ENCODE measurements at regions of chr17 and their contacts with region 1.

Region 1: GRCh38 chr17:27654654-27655524 is 23.9 kb downstream of the LGALS9 start:
- DNase-seq: peak; percentile 49
- H3K4me3 Mint-ChIP-seq: no peak overlapping the region
- H3K27ac Mint-ChIP-seq: no peak overlapping the region
- H3K4me1 Mint-ChIP-seq: peaks cover 13% of the 10 kb centered on the region
- H3K27me3 Mint-ChIP-seq: no peaks in the 10 kb centered on the region

Region 2: GRCh38 chr17:27381007-27381501 is 273.8 kb before region 1 on chr17:
- intact Hi-C with region 1: loop called (anchors 10 kb)
- DNase-seq: peak; percentile 72
- H3K4me3 Mint-ChIP-seq: no peak overlapping the region
- H3K27ac Mint-ChIP-seq: no peak overlapping the region
- H3K4me1 Mint-ChIP-seq: peaks cover 7% of the 10 kb centered on the region
- H3K27me3 Mint-ChIP-seq: peaks cover 29% of the 10 kb centered on the region

Region 3: DNA sequence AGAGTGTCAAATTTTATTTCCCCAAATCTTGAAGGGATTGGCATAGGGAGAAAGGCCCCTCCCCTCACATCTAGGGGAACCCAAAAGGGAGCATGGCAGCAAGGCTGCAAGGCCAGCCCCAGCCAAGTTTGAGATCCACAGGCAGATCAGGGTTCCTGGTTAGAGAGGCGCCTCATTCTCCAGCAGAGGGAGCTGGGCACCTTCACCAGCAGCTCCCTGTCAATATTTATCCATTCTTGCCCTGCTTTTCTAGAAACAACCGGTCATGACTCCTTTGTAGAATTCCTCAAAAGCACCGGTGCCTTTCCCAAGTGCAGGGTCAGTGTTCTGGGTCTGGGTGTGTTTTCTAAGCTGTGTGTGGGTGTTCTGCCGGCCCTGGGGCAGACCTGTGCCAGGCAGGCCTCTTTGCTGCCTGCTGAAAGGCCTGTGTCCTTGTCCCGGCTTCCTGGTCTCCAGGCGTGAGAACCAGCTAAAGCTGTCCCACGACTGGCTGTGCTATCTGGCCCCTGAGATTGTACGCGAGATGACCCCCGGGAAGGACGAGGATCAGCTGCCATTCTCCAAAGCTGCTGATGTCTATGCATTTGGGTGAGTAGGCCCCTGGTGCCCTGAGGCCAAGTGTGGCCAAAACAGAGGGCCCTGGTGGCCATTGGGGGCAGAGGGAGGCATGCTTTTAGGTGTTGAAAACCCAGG is 45.1 kb before region 1 on chr17:
- intact Hi-C with region 1: loop called (anchors 1 kb)
- DNase-seq: no peak
- H3K4me3 Mint-ChIP-seq: no peak overlapping the region
- H3K27ac Mint-ChIP-seq: no peak overlapping the region
- H3K4me1 Mint-ChIP-seq: peaks cover 32% of the 10 kb centered on the region
- H3K27me3 Mint-ChIP-seq: no peaks in the 10 kb centered on the region

Region 4: DNA sequence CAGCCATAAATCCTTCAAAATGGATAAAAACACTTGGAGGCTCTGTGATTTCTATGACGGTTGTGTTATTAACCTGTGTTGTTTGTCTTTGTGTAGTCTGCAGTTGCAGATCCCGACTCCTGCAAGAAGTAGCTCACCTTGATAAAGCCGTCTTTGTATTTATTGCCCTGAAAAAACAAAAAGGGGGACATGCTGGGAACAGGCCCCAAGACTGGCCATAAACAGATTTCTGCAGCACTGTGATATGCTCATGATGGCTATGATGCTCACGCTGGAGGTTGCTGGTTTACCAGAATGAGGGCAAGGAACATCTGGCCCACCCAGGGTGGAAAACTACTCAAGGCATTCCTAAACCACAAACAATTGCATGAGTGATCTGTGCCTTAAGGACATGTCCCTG is 47.1 kb after region 1 on chr17:
- intact Hi-C with region 1: no loop called
- DNase-seq: no peak
- H3K4me3 Mint-ChIP-seq: no peak overlapping the region
- H3K27ac Mint-ChIP-seq: no peak overlapping the region
- H3K4me1 Mint-ChIP-seq: no peaks in the 10 kb centered on the region
- H3K27me3 Mint-ChIP-seq: peaks cover 15% of the 10 kb centered on the region